HEK293T (cell line): ENCODE measurements at regions of chr19 and their contacts with region 1.

Region 1: GRCh38 chr19:17496337-17496997 is 15.0 kb upstream of the PGLS start:
- DNase-seq: peak; percentile 88

Region 2: GRCh38 chr19:17282488-17283255 is 213.8 kb before region 1 on chr19:
- CTCF ChIA-PET with region 1: no interaction called
- POLR2A ChIA-PET with region 1: no interaction called
- DNase-seq: peak; percentile 87

Region 3: GRCh38 chr19:17530586-17530985 is 34.1 kb after region 1 on chr19:
- CTCF ChIA-PET with region 1: interaction called, 10 read pairs
- POLR2A ChIA-PET with region 1: no interaction called
- DNase-seq: no peak